CD4-positive, alpha-beta T cell (primary cell): ENCODE measurements at regions of chr7 and their contacts with region 1.

Region 1: GRCh38 chr7:131792311-131792710 is 235.9 kb upstream of the PODXL start:
- DNase-seq: no peak
- ATAC-seq: no peak
- H3K4me3 ChIP-seq: no peak overlapping the region
- H3K4me3 Mint-ChIP-seq: no peak overlapping the region
- H3K27ac ChIP-seq: no peak overlapping the region
- H3K27ac Mint-ChIP-seq: no peak overlapping the region
- H3K4me1 ChIP-seq: no peaks in the 10 kb centered on the region
- H3K4me1 Mint-ChIP-seq: no peaks in the 10 kb centered on the region
- H3K27me3 ChIP-seq: no peaks in the 10 kb centered on the region
- H3K27me3 Mint-ChIP-seq: peaks cover 17% of the 10 kb centered on the region
- CTCF ChIP-seq: no peak

Region 2: GRCh38 chr7:132239422-132239994 is 447.2 kb after region 1 on chr7:
- CTCF ChIA-PET with region 1: no interaction called
- POLR2A ChIA-PET with region 1: no interaction called
- intact Hi-C with region 1: no loop called
- DNase-seq: no peak
- ATAC-seq: no peak
- H3K4me3 ChIP-seq: no peak overlapping the region
- H3K4me3 Mint-ChIP-seq: no peak overlapping the region
- H3K27ac ChIP-seq: no peak overlapping the region
- H3K27ac Mint-ChIP-seq: no peak overlapping the region
- H3K4me1 ChIP-seq: no peaks in the 10 kb centered on the region
- H3K4me1 Mint-ChIP-seq: no peaks in the 10 kb centered on the region
- H3K27me3 ChIP-seq: no peaks in the 10 kb centered on the region
- H3K27me3 Mint-ChIP-seq: peaks cover 12% of the 10 kb centered on the region
- CTCF ChIP-seq: no peak

Region 3: DNA sequence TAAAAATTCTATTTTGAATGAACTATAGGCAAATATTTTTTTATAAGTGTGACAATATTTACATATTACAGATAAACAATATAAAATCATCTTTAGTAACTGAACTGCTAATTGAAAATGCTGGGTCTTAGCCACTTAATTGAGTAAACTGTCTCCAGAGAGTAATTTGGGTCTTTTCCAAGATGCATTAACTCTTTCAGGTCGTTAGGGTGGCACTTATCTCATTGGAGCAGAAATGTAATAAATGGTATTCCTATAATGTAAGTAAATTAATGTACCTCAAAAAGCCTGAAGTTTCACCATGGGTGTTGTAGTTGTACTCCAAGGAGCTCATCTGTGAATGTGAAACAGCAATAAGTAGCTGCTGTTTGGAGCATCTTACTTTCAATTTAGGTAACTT is 1669.1 kb after region 1 on chr7:
- CTCF ChIA-PET with region 1: no interaction called
- POLR2A ChIA-PET with region 1: no interaction called
- intact Hi-C with region 1: loop called in 1 of 2 experiments (anchors 5 kb)
- DNase-seq: no peak
- ATAC-seq: no peak
- H3K4me3 ChIP-seq: no peak overlapping the region
- H3K4me3 Mint-ChIP-seq: no peak overlapping the region
- H3K27ac ChIP-seq: no peak overlapping the region
- H3K27ac Mint-ChIP-seq: no peak overlapping the region
- H3K4me1 ChIP-seq: no peaks in the 10 kb centered on the region
- H3K4me1 Mint-ChIP-seq: peaks cover 10% of the 10 kb centered on the region
- H3K27me3 ChIP-seq: no peaks in the 10 kb centered on the region
- H3K27me3 Mint-ChIP-seq: no peaks in the 10 kb centered on the region
- CTCF ChIP-seq: no peak